A673 (cell line): ENCODE measurements at regions of chr19 and their contacts with region 1.

Region 1: DNA sequence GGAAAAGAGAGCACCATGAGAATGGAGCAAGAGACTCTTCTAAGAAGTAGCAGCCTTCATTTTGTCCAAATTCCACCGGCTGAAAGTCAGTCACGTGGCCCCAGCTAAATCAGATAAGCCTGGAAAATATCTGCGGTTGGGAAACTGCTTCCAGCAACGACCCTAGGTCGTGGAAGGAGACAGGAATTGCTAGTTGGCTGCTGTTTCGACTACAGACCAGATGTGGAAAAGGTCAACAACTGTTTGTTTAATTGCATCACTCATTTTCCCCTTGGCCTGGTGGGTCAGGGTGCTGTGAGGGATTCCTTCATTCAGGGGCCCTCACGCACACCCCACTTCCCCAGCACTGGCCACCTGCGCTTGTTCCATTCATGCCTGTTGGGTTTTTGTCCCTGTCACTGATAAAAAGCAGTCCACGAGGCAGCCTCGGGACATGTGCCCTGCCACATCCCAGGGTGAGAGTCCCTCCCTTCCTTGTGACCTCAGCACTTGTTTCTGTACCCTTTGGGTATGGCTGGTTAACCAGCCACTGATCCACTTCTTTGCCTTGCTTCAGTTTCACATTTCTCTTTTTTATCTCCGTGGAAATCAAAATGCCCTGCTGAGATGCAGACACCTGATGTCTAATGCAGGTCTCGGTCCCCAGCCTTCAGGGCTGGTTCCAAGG is 107.2 kb downstream of the ZNF536 start:
- DNase-seq: no peak
- H3K4me3 ChIP-seq: no peak overlapping the region
- H3K27ac ChIP-seq: no peak overlapping the region
- H3K4me1 ChIP-seq: no peaks in the 10 kb centered on the region
- H3K27me3 ChIP-seq: no peaks in the 10 kb centered on the region
- CTCF ChIP-seq: no peak

Region 2: DNA sequence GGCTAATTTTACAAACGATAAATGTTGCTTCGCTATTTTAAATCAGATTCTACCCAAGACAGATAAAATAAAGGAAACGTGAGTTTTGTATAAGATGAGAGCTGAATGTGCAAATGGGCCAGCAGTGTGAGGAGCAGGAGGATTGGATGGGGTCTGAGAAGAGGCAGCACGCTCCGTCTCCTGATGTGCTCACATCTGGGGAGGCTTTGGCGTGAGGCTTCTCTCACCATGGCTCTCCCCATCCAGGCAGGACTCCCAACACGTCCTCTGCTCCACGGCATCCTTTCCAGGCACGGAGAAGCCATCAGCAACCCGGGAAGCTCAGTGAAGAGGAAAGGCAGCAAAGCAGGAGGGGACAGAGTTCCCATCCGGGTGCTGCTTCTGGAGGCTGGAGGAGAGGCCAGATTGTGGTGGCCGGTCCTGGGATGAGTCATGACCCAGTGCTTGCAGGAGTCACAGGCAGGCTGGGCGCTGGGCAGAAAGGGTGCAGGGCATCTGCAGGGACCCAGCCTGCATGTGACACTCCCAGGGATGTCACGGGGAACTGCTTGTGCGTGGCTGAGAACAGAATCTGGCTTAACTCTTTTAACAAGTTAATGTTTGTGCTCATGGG is 59.8 kb before region 1 on chr19:
- CTCF ChIA-PET with region 1: no interaction called
- POLR2A ChIA-PET with region 1: no interaction called
- intact Hi-C with region 1: no loop called
- DNase-seq: no peak
- H3K4me3 ChIP-seq: no peak overlapping the region
- H3K27ac ChIP-seq: no peak overlapping the region
- H3K4me1 ChIP-seq: no peaks in the 10 kb centered on the region
- H3K27me3 ChIP-seq: peaks cover 6% of the 10 kb centered on the region
- CTCF ChIP-seq: no peak

Region 3: DNA sequence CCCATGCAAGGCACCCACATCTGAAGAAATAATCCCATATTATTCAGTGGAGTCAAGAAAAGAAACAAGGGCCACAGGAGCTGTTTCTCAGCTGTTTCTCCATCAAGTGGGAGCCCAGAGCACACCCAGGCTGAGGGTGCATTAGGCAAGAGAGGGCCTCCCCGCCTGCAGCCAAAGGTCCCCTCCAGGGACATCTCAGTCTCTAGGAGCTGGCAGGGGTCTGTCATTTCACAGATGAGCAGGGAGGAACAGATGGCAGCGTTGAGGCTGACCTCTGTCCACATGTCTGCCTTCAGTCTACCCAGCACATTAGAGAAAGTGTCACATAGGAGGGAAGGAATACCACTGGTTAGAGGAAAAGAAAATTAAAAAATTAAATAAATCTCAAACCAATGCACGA is 50.5 kb after region 1 on chr19:
- CTCF ChIA-PET with region 1: no interaction called
- POLR2A ChIA-PET with region 1: interaction called, 11 read pairs
- intact Hi-C with region 1: no loop called
- DNase-seq: no peak
- H3K4me3 ChIP-seq: no peak overlapping the region
- H3K27ac ChIP-seq: no peak overlapping the region
- H3K4me1 ChIP-seq: no peaks in the 10 kb centered on the region
- H3K27me3 ChIP-seq: no peaks in the 10 kb centered on the region
- CTCF ChIP-seq: no peak